ENCODE measurements at regions of chr2 and their contacts with region 1.

Region 1: GRCh38 chr2:68121873-68122679 is 35.6 kb upstream of the PNO1 start:
- DNase-seq: peak; percentile 88
- H3K4me3 ChIP-seq: peak overlapping the region in 1 of 3 experiments; percentile 22
- H3K27ac ChIP-seq: no peak overlapping the region
- H3K4me1 ChIP-seq: peaks cover 3% of the 10 kb centered on the region
- H3K27me3 ChIP-seq: peaks cover 0 to 2% of the 10 kb centered on the region in 2 experiments
- CTCF ChIP-seq: peak; percentile 93 to 97
- POLR2A ChIP-seq: no peak

Region 2: DNA sequence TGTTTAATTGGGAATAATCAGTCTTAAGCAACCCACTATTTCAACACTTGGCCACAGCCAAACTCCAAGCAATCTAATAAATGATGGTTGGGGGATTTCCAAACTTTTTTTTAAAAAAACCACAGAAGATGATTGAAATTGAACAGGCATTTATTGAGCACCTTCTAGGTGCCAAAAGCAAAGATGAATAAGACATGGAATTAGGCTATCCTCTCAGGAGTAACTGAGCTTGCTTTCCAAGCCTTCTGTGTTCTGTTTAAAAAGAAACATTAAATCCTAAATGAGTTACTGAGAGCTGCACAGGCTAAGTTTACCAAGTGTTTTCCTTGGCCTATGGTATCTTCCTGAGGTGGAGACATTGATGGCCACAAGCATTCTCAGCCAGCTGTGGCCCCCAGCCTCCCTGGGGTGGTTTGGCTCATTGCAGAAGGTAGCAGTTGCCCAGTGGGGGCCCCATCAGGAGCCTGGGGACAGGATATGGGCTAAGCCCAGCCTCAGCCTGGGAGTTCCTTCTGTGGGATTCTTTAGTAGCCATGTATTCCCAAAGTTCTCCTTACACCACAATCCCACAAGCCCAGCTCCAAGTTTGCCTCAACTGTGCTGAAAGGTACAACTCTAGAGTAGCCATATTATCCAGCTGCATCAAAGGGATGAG is 233.6 kb before region 1 on chr2:
- CTCF ChIA-PET with region 1: no interaction called
- POLR2A ChIA-PET with region 1: no interaction called
- dilution Hi-C with region 1: no loop called
- intact Hi-C with region 1: no loop called
- DNase-seq: no peak
- H3K4me3 ChIP-seq: no peak overlapping the region
- H3K27ac ChIP-seq: no peak overlapping the region
- H3K4me1 ChIP-seq: no peaks in the 10 kb centered on the region
- H3K27me3 ChIP-seq: no peaks in the 10 kb centered on the region
- CTCF ChIP-seq: no peak
- POLR2A ChIP-seq: no peak

Region 3: GRCh38 chr2:68098291-68098797 is 23.7 kb before region 1 on chr2:
- CTCF ChIA-PET with region 1: no interaction called
- POLR2A ChIA-PET with region 1: no interaction called
- dilution Hi-C with region 1: no loop called
- intact Hi-C with region 1: no loop called
- DNase-seq: no peak
- H3K4me3 ChIP-seq: no peak overlapping the region
- H3K27ac ChIP-seq: no peak overlapping the region
- H3K4me1 ChIP-seq: no peaks in the 10 kb centered on the region
- H3K27me3 ChIP-seq: peaks cover 5 to 12% of the 10 kb centered on the region in 2 experiments
- CTCF ChIP-seq: no peak
- POLR2A ChIP-seq: no peak

Region 4: DNA sequence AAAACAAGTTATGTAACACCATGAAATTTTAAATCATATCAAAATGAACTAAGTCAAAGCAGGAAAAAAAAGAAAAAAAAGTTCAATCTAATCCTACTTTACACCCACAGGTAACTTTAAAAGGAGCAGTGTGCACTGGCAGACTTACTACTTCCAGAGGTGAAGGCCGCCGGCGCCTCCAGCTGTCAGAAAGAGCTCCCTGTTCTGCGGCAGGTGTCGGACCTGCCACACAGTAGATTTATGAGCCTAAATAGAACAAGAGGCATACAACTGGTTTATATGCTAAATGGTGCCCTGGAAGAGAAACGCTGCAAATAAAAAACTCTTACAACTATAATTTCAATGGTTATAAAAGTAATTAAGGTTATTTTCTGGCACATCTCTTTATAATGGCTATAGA is 12.5 kb after region 1 on chr2:
- CTCF ChIA-PET with region 1: interaction called, 10 read pairs
- POLR2A ChIA-PET with region 1: no interaction called
- dilution Hi-C with region 1: no loop called
- intact Hi-C with region 1: no loop called
- DNase-seq: no peak
- H3K4me3 ChIP-seq: no peak overlapping the region
- H3K27ac ChIP-seq: no peak overlapping the region
- H3K4me1 ChIP-seq: no peaks in the 10 kb centered on the region
- H3K27me3 ChIP-seq: no peaks in the 10 kb centered on the region
- CTCF ChIP-seq: no peak
- POLR2A ChIP-seq: no peak

Region 5: GRCh38 chr2:68185541-68186164 is 63.6 kb after region 1 on chr2:
- CTCF ChIA-PET with region 1: interaction called, 6 read pairs
- POLR2A ChIA-PET with region 1: no interaction called
- dilution Hi-C with region 1: no loop called
- intact Hi-C with region 1: loop called (anchors 1 kb)
- DNase-seq: peak; percentile 37
- H3K4me3 ChIP-seq: no peak overlapping the region
- H3K27ac ChIP-seq: no peak overlapping the region
- H3K4me1 ChIP-seq: no peaks in the 10 kb centered on the region
- H3K27me3 ChIP-seq: no peaks in the 10 kb centered on the region
- CTCF ChIP-seq: peak; percentile 70 to 80
- POLR2A ChIP-seq: no peak

Region 6: DNA sequence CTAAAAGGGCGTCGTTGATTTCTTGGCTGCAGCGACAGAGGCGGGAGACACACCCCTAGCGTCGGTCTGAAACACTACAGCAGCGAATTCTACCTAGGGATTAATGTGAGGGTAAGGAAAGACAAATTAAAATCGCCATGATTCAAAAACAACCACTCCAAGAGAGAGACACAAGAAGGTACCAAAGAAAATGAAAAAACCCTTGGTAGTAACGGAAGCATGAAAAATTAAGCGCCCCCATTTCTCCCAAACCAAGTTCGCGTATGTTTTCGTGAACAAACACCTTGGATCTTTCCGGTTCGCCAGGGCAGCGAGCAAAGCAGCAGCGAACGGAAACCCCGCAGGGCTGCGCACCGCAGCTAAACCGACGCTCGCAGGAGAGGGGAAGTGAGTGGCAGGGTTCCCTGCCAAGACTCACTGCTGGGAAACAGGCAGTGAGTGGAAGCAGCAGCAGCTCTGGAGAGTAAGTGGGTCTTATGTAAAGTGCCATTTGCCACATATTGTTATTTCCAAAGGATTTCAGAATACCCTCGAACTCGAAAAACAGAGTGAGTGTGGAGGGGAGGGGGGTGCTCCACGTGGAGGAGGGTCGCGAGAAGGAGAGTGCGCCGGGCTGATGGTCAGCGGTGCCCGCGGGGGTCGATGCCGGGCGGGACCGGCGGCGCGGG is 129.2 kb after region 1 on chr2:
- CTCF ChIA-PET with region 1: interaction called, 7 read pairs
- POLR2A ChIA-PET with region 1: no interaction called
- dilution Hi-C with region 1: no loop called
- intact Hi-C with region 1: loop called (anchors 1 kb)
- DNase-seq: peak; percentile 85
- H3K4me3 ChIP-seq: peak overlapping the region; percentile 55 to 98 (median 88)
- H3K27ac ChIP-seq: peak overlapping the region; percentile 82
- H3K4me1 ChIP-seq: peaks cover 38% of the 10 kb centered on the region
- H3K27me3 ChIP-seq: no peaks in the 10 kb centered on the region
- CTCF ChIP-seq: peak; percentile 63
- POLR2A ChIP-seq: no peak

Region 7: DNA sequence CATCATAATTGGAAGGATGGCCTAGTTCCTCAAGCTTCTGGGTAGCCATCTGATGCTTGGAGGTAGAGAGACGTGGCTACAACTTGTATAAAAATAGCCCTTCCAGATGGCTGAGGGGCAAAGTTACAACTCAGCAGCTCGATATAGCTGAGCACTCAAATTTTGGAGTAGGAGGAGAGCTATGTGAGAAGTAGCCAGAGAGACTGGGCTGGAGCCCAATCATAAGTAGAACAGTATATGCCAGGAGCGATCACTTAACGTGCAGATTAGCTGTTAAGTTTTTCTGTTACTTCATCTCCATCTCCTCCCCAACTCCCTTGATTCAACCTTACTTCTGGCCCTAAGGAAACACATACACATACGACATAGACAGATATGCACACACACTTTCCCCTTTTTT is 168.8 kb after region 1 on chr2:
- CTCF ChIA-PET with region 1: interaction called, 153 read pairs
- POLR2A ChIA-PET with region 1: no interaction called
- dilution Hi-C with region 1: no loop called
- intact Hi-C with region 1: loop called (anchors 1 kb)
- DNase-seq: no peak
- H3K4me3 ChIP-seq: no peak overlapping the region
- H3K27ac ChIP-seq: no peak overlapping the region
- H3K4me1 ChIP-seq: no peaks in the 10 kb centered on the region
- H3K27me3 ChIP-seq: no peaks in the 10 kb centered on the region
- CTCF ChIP-seq: no peak
- POLR2A ChIP-seq: no peak

Region 8: GRCh38 chr2:68441179-68441993 is 319.3 kb after region 1 on chr2:
- CTCF ChIA-PET with region 1: interaction called, 130 read pairs
- POLR2A ChIA-PET with region 1: no interaction called
- dilution Hi-C with region 1: no loop called
- intact Hi-C with region 1: loop called (anchors 1 kb)
- DNase-seq: peak; percentile 67
- H3K4me3 ChIP-seq: no peak overlapping the region
- H3K27ac ChIP-seq: no peak overlapping the region
- H3K4me1 ChIP-seq: no peaks in the 10 kb centered on the region
- H3K27me3 ChIP-seq: peaks cover 3 to 12% of the 10 kb centered on the region in 2 experiments
- CTCF ChIP-seq: peak; percentile 79 to 83
- POLR2A ChIP-seq: no peak

Measured in endothelial cell of umbilical vein (primary cell).